Heart left ventricle (tissue), 16 donors: ENCODE measurements at regions of chr3 and their contacts with region 1.

Region 1: GRCh38 chr3:128603811-128604775 is 46.5 kb downstream of the RPN1 start:
- DNase-seq: no peak
- ATAC-seq: no peak
- H3K4me3 ChIP-seq: no peak overlapping the region
- H3K27ac ChIP-seq: no peak overlapping the region
- H3K4me1 ChIP-seq: peaks cover 0 to 15% (median 7%) of the 10 kb centered on the region in 12 donors
- H3K27me3 ChIP-seq: no peaks in the 10 kb centered on the region
- CTCF ChIP-seq: no peak
- POLR2A ChIP-seq: no peak

Region 2: GRCh38 chr3:128426128-128426921 is 177.8 kb before region 1 on chr3:
- intact Hi-C with region 1: loop called (anchors 1 to 5 kb)
- DNase-seq: peak in 4 of 5 donors; percentile 36 to 83 (median 46)
- ATAC-seq: peak; percentile 21 to 93 (median 80)
- H3K4me3 ChIP-seq: peak overlapping the region in 10 of 12 donors; percentile 12 to 50 (median 34)
- H3K27ac ChIP-seq: no peak overlapping the region
- H3K4me1 ChIP-seq: peaks cover 0 to 14% (median 4%) of the 10 kb centered on the region in 12 donors
- H3K27me3 ChIP-seq: peaks cover 0 to 30% (median 1%) of the 10 kb centered on the region in 9 donors
- CTCF ChIP-seq: peak; percentile 52 to 99 (median 89)
- POLR2A ChIP-seq: no peak

Region 3: GRCh38 chr3:128447561-128448013 is 156.5 kb before region 1 on chr3:
- intact Hi-C with region 1: no loop called
- DNase-seq: no peak
- ATAC-seq: no peak
- H3K4me3 ChIP-seq: no peak overlapping the region
- H3K27ac ChIP-seq: no peak overlapping the region
- H3K4me1 ChIP-seq: no peaks in the 10 kb centered on the region
- H3K27me3 ChIP-seq: no peaks in the 10 kb centered on the region
- CTCF ChIP-seq: no peak
- POLR2A ChIP-seq: no peak

Region 4: DNA sequence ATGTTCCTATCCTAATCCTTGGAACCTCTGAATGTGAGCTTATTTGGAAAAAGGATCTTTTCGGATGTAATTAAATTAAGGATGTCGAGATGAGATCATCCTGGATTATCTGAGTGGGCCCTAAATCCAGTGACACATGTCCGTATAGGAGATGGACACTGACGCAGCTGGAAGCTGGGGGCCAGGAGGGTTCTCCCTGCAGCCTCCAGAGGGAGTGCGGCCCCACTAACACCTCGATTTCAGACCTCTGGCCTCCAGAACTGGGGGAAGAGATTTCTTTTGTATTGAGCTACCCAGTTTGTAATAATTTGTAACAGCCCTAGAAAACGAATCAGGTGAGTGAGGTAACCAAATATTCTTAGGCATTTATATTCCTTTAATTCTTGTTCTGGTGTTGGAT is 139.9 kb before region 1 on chr3:
- intact Hi-C with region 1: loop called in 1 of 10 experiments (anchors 1 kb)
- DNase-seq: no peak
- ATAC-seq: peak in 1 of 4 donors; percentile 53
- H3K4me3 ChIP-seq: no peak overlapping the region
- H3K27ac ChIP-seq: no peak overlapping the region
- H3K4me1 ChIP-seq: no peaks in the 10 kb centered on the region
- H3K27me3 ChIP-seq: peaks cover 0 to 20% (median 0%) of the 10 kb centered on the region in 9 donors
- CTCF ChIP-seq: peak; percentile 27 to 60 (median 38)
- POLR2A ChIP-seq: no peak

Region 5: DNA sequence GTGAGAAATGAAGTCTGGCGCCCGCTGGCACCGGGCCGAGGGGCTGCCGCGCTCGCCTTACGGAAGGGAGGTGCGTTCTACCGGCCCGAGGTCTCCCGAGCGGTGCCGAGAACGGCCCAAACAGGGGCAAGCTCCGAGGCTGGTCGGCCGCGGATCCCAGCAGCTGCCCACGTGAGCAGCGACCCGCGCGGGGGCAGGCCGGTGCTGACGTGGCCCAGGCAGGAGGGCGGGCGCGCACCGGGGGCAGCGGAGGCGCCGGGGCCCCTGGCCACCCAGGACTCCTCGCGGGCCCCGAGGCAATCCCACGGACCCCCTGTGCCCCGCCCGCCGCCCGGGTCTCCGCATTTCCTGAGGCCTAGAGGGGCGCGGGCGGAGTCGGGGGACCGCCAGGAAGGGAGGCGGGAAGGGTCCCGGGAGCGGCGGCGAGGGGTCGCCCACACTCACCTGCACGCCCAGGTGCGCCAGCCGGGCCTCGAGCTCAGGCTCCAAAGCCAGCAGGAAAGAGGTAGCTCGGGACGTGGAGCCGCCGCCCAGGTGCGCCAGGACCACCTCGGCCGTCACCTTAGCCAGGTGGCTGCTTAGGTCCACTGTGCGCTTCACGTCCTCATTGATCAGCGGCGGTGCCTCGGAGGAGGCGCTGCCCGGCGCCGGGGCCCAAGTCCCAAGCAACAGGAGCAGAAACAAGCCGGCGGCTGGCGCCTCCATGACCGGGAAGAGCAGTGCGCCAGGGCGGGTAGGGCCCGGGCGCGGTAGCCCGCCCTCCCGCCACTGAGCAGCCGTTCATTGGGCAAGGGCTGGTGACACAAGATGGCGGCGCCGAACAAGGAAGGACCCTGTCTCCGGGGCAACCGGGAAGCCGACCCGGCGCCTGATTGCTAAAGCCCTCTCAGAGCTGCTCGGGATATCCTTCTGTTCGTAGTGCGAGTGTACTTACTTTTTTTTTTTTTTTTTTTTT is 46.3 kb after region 1 on chr3 and contains the start of gene RPN1:
- intact Hi-C with region 1: no loop called
- DNase-seq: peak; percentile 97 to 98 (median 98)
- ATAC-seq: peak; percentile 98 to 100 (median 100)
- H3K4me3 ChIP-seq: peak within 1 kb of the TSS; percentile 76 to 100 (median 92)
- H3K27ac ChIP-seq: peak within 1 kb of the TSS; percentile 92 to 99 (median 98)
- H3K4me1 ChIP-seq: peaks cover 5 to 36% (median 18%) of the 10 kb centered on the region in 12 donors
- H3K27me3 ChIP-seq: no peaks in the 10 kb centered on the region
- CTCF ChIP-seq: peak in 1 of 12 donors; percentile 7
- POLR2A ChIP-seq: peak; percentile 48 to 71
- total RNA-seq, gene RPN1: 71.7 to 161 (median 119) TPM

Region 6: DNA sequence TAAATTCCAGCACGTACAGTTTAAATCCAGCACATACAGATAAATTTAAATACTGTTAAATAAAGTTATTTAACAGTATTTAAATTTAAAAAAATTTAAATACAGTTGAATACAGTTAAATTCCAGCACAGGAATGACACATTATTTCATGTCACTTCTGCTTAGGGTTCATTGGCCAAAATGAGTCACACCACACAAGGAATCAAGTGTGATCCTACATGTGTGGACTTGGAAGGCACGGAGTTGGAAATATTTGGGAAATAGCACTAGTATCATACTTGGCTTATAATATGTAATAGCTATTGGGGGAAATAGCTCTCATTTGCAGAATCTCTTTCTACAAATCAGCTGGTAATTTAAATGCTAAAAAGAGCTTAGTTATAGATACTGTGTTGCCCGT is 132.5 kb after region 1 on chr3:
- intact Hi-C with region 1: no loop called
- DNase-seq: no peak
- ATAC-seq: peak in 1 of 4 donors; percentile 27
- H3K4me3 ChIP-seq: no peak overlapping the region
- H3K27ac ChIP-seq: no peak overlapping the region
- H3K4me1 ChIP-seq: peaks cover 5 to 75% (median 50%) of the 10 kb centered on the region in 12 donors
- H3K27me3 ChIP-seq: no peaks in the 10 kb centered on the region
- CTCF ChIP-seq: no peak
- POLR2A ChIP-seq: no peak